Thyroid gland (tissue), 4 donors: ENCODE measurements at regions of chr3 and their contacts with region 1.

Region 1: GRCh38 chr3:66816090-66816761 is 181.9 kb upstream of the KBTBD8 start:
- DNase-seq: peak in 1 of 2 donors; percentile 3
- H3K4me3 ChIP-seq: no peak overlapping the region
- H3K27ac ChIP-seq: no peak overlapping the region
- H3K4me1 ChIP-seq: no peaks in the 10 kb centered on the region
- H3K27me3 ChIP-seq: no peaks in the 10 kb centered on the region
- CTCF ChIP-seq: peak in 5 of 6 experiments; percentile 46 to 69 (median 63)
- POLR2A ChIP-seq: no peak

Region 2: DNA sequence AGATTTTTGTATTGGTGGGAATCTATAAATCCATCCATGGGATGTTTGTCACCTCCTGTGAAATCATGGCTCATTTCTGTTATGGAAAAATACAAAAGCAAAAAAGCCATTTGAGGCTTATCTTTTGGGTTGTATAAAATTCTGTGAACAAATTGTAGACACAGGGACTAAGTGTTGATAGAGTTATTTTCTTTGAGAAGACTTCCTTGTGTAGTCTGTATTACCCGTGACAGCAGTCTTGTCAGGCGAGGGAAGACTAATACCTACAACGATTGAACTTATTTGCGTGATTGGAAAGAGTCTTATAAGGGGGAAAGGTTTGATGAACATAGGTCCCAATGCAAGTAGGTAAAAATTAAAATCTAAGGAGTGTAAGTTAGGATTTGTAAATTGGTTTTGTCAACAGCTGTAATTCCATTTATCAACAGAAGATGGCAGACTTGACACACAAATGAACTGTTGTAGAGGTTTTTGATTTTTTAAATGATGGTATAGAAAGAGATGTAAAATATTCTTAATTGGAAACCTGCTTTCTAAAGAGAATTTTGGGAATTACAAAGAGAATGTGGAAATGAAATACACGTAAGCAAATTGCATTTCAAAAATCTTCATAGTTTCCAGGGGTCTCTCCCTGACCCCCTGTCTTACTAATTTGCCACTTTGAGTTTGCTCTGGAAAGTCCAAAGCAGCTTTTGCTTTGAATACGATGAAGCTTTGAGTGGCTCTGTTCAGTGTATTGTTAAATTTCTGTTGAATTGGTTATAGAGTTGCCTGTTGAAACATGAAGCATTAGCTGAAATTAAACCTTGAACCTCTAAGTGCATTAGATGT is 562.2 kb before region 1 on chr3:
- intact Hi-C with region 1: loop called (anchors 10 kb)
- DNase-seq: no peak
- H3K4me3 ChIP-seq: no peak overlapping the region
- H3K27ac ChIP-seq: no peak overlapping the region
- H3K4me1 ChIP-seq: peaks cover 0 to 5% of the 10 kb centered on the region in 2 donors
- H3K27me3 ChIP-seq: no peaks in the 10 kb centered on the region
- CTCF ChIP-seq: peak; percentile 38 to 79 (median 66)
- POLR2A ChIP-seq: no peak

Region 3: DNA sequence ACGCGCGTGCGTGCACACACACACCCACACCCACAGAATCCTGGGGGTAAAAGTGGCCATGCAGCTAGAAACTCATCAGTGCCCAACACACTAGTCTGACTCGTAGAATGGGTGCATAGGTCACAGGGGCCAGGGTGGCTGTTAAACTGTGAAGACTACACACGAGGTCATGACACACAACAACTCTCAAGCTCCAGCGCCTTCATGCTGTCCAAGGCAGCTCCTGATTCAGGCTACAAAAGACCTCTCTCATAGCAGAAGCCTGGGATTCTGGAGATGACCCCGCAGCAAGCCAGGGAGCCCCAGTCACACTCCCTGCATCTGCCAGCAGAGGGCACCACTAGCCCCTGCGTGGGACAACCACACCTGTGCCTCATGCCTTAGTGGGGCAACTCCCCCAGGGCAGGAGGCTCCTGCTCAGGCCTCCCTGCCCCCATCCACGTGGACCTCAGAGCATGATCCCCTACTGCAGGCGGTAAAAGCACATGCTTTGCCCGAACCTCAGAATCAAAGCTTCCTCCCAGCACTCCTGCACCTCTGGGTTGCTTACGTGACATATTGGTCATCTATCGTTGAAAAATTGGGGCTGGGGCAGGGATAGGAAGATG is 408.5 kb before region 1 on chr3:
- intact Hi-C with region 1: loop called (anchors 5 kb)
- DNase-seq: peak; percentile 70 to 75
- H3K4me3 ChIP-seq: no peak overlapping the region
- H3K27ac ChIP-seq: no peak overlapping the region
- H3K4me1 ChIP-seq: no peaks in the 10 kb centered on the region
- H3K27me3 ChIP-seq: no peaks in the 10 kb centered on the region
- CTCF ChIP-seq: peak; percentile 78 to 93 (median 84)
- POLR2A ChIP-seq: no peak